ENCODE measurements at regions of chr5 and their contacts with region 1.

Region 1: GRCh38 chr5:123511648-123512605 is at the start of gene CSNK1G3:
- DNase-seq: peak; percentile 97
- H3K4me3 ChIP-seq: peak within 1 kb of the TSS; percentile 83 to 96 (median 94)
- H3K27ac ChIP-seq: peak within 1 kb of the TSS; percentile 97 to 99 (median 98)
- H3K4me1 ChIP-seq: peaks cover 12 to 36% (median 19%) of the 10 kb centered on the region in 4 donors
- H3K27me3 ChIP-seq: no peaks in the 10 kb centered on the region
- CTCF ChIP-seq: no peak
- EP300 ChIP-seq: no peak
- POLR2A ChIP-seq: peak; percentile 94
- total RNA-seq, gene CSNK1G3: 31.8 to 84.0 (median 55.9) TPM

Region 2: GRCh38 chr5:123119334-123119986 is 392.5 kb before region 1 on chr5:
- in situ Hi-C with region 1: no loop called
- intact Hi-C with region 1: no loop called
- DNase-seq: no peak
- H3K4me3 ChIP-seq: no peak overlapping the region
- H3K27ac ChIP-seq: no peak overlapping the region
- H3K4me1 ChIP-seq: peaks cover 0 to 6% (median 2%) of the 10 kb centered on the region in 4 donors
- H3K27me3 ChIP-seq: peaks cover 28% of the 10 kb centered on the region
- CTCF ChIP-seq: no peak
- EP300 ChIP-seq: no peak
- POLR2A ChIP-seq: no peak

Region 3: GRCh38 chr5:123423278-123424149 is 88.4 kb before region 1 on chr5 and contains the start of gene CEP120:
- in situ Hi-C with region 1: no loop called
- intact Hi-C with region 1: loop called (anchors 5 kb)
- DNase-seq: peak; percentile 99
- H3K4me3 ChIP-seq: peak within 1 kb of the TSS; percentile 63 to 86 (median 83)
- H3K27ac ChIP-seq: peak within 1 kb of the TSS; percentile 93 to 95 (median 94)
- H3K4me1 ChIP-seq: peaks cover 3 to 27% (median 18%) of the 10 kb centered on the region in 4 donors
- H3K27me3 ChIP-seq: no peaks in the 10 kb centered on the region
- CTCF ChIP-seq: peak; percentile 60 to 94 (median 79)
- EP300 ChIP-seq: peak; percentile 45
- POLR2A ChIP-seq: peak; percentile 95
- total RNA-seq, gene CEP120: 7.6 to 24.3 (median 18.2) TPM

Region 4: DNA sequence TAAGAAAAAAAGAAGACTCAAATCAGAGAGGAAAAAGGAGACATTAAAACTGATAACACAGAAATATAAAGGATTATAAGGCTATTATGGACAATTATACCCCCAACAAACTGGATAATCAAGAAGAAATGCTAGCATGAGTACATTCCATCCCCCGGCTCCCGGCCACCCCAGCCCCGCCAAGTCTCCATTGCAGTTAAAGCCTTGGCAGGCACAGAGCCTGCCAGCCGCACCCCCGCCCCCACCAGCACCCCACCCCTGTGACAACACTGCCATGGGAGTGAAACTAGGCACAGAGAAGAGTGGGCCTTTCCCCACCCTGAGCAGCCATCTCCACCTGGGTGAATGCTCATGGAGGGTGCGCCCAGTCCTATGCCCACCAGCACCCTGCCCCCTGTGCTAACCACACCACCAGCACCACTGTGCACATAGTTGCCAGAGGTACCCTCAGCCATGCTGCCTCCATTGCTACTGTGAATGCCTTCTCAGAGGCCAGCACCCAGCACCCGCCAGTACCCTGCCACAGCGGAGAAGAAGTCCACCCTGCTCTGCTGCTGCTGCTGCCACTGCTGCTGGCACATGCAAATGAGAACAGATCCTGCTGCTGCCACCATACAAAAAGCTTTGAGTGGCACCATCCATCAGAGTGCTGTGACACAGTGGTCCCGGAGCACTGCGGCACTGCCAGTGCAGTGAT is 117.1 kb after region 1 on chr5:
- in situ Hi-C with region 1: no loop called
- intact Hi-C with region 1: no loop called
- DNase-seq: no peak
- H3K4me3 ChIP-seq: no peak overlapping the region
- H3K27ac ChIP-seq: no peak overlapping the region
- H3K4me1 ChIP-seq: no peaks in the 10 kb centered on the region
- H3K27me3 ChIP-seq: no peaks in the 10 kb centered on the region
- CTCF ChIP-seq: no peak
- EP300 ChIP-seq: no peak
- POLR2A ChIP-seq: no peak

Measured in transverse colon (tissue), 4 donors.